Activated B cell treated with CpG ODN at 0.5 μM for 24 hours (primary cell): ENCODE measurements at regions of chr4 and their contacts with region 1.

Region 1: DNA sequence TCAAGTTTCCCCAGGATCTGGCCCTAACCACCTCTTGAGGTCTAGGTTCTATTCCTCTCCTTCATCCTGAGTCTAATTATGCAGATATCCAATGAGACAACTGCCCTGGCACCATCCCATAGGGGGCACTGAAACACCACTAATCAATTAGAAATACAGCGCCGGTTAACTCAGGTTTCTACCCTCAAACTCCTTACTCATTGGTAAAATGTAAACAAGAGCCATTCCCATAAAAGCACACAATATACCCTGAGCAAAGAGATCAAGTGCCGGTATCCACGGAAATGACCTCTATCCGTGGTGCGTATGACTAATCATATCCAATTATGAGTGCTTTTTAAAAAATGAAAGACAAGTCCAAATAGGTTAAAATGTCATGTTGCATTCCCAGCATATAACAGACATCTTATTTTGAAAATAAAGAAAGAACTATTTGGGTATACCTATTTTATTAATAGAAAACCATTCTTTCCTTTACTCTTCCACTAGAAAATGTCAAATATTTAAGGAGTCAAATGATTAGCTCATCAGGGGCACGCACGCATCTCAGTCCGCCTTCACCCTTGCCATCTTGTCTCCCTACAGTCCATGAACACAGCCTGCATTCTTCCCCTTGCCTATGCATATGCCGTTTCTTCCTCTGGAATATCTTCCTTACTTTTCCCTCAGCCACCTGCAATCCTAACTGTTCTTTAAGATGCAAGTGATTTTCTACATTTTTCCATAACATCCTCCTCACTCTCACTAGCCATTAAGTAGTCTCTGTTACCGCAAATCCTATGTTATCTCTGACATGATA is 141.1 kb downstream of the MAML3 start:
- DNase-seq: no peak
- ATAC-seq: peak; percentile 81
- H3K4me3 Mint-ChIP-seq: no peak overlapping the region
- H3K27ac Mint-ChIP-seq: no peak overlapping the region
- H3K4me1 Mint-ChIP-seq: no peaks in the 10 kb centered on the region
- H3K27me3 Mint-ChIP-seq: peaks cover 10% of the 10 kb centered on the region
- CTCF ChIP-seq: no peak

Region 2: DNA sequence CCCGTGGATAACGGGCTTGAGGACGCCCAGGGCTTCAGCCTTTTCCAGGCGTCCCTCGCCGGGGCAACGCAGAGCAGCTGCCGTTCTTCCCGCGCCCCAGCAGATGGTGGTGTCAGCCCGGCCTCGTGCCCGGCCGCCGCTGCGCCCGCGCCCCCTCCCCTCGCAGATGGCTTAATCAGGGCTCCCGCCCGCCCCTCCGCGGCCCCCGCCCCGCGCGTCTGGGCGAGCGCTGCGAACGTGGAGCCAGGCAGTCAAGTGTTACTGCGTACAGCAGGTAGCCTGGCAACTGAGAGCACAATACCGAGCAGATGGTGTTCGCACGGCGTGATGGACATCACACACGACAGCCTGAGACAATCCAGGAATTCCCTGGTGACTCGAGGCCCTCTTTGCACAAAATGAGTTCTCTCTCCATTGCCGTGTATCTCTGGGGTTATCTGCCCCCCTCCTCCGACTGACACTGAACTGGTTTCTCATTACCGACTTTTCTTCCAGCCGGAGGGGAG is 278.0 kb before region 1 on chr4:
- CTCF ChIA-PET with region 1: no interaction called
- POLR2A ChIA-PET with region 1: no interaction called
- intact Hi-C with region 1: loop called (anchors 1 kb)
- DNase-seq: peak; percentile 66
- ATAC-seq: peak; percentile 87
- H3K4me3 Mint-ChIP-seq: peak overlapping the region; percentile 76
- H3K27ac Mint-ChIP-seq: no peak overlapping the region
- H3K4me1 Mint-ChIP-seq: peaks cover 15% of the 10 kb centered on the region
- H3K27me3 Mint-ChIP-seq: peaks cover 13% of the 10 kb centered on the region
- CTCF ChIP-seq: no peak

Region 3: DNA sequence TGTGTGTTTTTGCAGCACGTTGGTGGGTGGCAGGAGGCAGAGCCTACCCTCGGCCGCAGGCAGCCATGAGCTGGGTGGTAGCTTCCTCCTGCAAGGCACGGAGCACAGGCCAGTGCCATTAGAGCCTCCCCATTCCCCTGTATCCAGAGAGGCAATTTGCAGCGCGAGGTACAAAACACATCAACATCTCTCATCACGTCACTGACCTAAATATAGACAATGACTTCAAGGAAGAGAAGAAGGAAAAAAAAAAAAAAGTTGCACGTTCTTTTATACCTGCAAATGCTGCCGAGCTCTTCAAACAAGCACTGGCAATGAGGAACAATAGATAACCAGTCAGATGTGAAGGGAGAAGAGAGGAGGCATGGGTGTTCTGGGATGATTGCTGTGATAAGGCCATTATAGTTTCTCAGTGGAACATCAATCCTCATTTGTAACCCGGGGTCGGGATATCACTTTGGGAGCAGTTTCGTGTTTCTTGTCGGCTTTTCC is 187.3 kb before region 1 on chr4:
- CTCF ChIA-PET with region 1: no interaction called
- POLR2A ChIA-PET with region 1: no interaction called
- intact Hi-C with region 1: no loop called
- DNase-seq: no peak
- ATAC-seq: no peak
- H3K4me3 Mint-ChIP-seq: no peak overlapping the region
- H3K27ac Mint-ChIP-seq: no peak overlapping the region
- H3K4me1 Mint-ChIP-seq: no peaks in the 10 kb centered on the region
- H3K27me3 Mint-ChIP-seq: no peaks in the 10 kb centered on the region
- CTCF ChIP-seq: no peak

Region 4: DNA sequence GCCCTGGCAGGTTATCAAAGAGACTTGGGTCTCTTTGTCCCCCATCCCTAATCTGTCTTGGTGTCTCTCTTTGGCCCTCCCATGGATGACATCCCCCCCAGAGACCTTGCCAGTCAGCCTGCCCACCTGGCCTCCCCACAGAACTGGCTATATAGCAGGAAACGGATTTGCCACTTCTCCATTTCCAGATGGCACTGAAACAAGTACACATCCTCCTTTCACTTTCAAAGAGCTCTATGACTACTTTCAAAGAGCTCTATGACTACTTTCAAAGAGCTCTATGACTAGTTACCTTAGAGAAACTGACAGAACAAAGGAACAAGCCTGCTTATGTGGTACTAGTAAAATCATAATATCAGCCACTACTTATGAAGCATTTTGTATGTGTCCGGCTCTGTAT is 34.2 kb before region 1 on chr4:
- CTCF ChIA-PET with region 1: no interaction called
- POLR2A ChIA-PET with region 1: no interaction called
- intact Hi-C with region 1: no loop called
- DNase-seq: peak; percentile 33
- ATAC-seq: peak; percentile 87
- H3K4me3 Mint-ChIP-seq: peak overlapping the region; percentile 65
- H3K27ac Mint-ChIP-seq: peak overlapping the region; percentile 65
- H3K4me1 Mint-ChIP-seq: peaks cover 55% of the 10 kb centered on the region
- H3K27me3 Mint-ChIP-seq: no peaks in the 10 kb centered on the region
- CTCF ChIP-seq: no peak

Region 5: DNA sequence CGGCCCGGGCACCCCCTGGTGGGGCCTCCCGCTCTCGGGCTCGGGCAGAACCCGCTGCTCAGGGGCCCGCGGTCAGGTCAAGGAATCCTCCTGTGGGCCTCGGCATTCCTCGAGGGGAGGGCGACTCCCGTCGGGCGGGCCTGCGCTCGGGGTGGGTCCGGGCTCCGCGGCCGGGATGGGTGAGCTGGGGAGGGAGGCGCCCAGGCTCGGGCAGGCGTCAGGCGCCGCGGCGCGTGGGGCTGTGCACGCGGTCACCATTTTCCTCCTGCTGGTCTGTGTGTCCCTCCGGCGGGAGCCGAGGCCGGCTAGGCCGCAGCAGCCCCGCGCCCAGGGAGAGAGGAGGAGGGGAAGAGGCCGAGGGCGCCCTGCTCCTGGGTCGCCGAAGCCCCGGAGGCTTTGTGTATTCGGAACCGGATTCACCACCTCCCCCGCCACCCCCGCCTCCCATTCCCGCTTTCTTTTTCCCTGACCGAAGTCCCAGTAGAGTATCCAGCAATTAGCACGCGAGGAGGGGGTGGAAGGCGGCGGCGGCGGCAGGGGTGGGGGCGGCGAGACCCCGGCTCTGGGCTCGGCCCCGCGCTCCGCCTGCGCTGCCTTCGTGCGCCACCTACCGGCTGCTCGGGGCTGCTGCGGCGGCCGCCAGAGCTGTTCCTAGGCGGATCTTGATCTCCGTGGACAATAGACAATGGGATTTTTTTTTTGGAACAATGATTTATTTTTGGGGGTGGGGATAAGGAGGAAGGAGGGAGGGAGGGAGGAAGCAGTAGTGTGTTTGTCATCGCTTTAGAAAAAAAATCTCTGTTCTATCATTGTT is 240.1 kb after region 1 on chr4:
- CTCF ChIA-PET with region 1: interaction called, 83 read pairs
- POLR2A ChIA-PET with region 1: interaction called, 9 read pairs
- intact Hi-C with region 1: loop called (anchors 1 kb)
- DNase-seq: peak; percentile 67
- ATAC-seq: peak; percentile 83
- H3K4me3 Mint-ChIP-seq: peak overlapping the region; percentile 72
- H3K27ac Mint-ChIP-seq: no peak overlapping the region
- H3K4me1 Mint-ChIP-seq: peaks cover 8% of the 10 kb centered on the region
- H3K27me3 Mint-ChIP-seq: peaks cover 25% of the 10 kb centered on the region
- CTCF ChIP-seq: peak; percentile 82

Region 6: DNA sequence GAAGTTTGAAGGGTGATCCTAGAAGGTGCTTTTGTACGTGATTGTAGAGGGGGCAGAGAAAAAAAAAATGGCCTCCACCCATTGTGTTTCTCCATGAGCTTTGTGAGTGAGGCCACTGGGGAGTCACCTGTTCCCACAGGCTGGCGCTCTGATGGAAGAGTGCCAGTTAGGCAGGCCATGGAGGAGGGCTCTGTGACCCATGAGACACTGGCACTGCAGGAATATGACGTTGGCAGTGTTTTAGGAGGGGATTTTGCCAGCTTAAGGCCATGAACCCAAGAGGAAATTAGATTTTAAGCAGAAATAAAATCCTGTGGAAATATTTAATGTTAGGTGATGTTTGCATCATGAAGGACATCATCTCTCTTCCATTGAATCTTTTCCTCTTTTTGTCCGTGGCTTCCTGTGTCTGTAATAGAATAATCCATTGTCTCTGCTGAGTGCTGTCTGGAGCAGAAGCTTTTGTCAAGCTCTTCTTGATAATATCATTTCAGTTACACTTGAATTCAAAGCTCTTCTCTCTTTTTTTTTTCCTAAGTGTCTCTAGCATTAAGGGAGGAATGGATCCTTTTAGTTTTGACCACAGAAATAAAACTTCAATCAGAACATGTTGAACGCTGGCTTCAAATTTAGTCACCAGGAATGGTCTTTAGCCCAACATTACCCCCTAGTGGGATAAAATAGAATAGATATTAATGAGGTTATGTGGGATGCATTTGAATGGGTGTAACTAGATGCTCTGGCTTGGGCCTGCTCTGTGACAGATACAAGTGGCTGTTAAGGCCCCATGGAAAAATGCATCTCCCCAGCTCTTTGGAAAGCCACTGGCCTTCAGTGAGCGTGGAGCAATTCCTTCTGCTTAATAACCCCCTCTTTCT is 596.9 kb after region 1 on chr4:
- CTCF ChIA-PET with region 1: no interaction called
- POLR2A ChIA-PET with region 1: no interaction called
- intact Hi-C with region 1: loop called (anchors 5 kb)
- DNase-seq: no peak
- ATAC-seq: peak; percentile 83
- H3K4me3 Mint-ChIP-seq: no peak overlapping the region
- H3K27ac Mint-ChIP-seq: no peak overlapping the region
- H3K4me1 Mint-ChIP-seq: peaks cover 12% of the 10 kb centered on the region
- H3K27me3 Mint-ChIP-seq: peaks cover 8% of the 10 kb centered on the region
- CTCF ChIP-seq: peak; percentile 49

Region 7: DNA sequence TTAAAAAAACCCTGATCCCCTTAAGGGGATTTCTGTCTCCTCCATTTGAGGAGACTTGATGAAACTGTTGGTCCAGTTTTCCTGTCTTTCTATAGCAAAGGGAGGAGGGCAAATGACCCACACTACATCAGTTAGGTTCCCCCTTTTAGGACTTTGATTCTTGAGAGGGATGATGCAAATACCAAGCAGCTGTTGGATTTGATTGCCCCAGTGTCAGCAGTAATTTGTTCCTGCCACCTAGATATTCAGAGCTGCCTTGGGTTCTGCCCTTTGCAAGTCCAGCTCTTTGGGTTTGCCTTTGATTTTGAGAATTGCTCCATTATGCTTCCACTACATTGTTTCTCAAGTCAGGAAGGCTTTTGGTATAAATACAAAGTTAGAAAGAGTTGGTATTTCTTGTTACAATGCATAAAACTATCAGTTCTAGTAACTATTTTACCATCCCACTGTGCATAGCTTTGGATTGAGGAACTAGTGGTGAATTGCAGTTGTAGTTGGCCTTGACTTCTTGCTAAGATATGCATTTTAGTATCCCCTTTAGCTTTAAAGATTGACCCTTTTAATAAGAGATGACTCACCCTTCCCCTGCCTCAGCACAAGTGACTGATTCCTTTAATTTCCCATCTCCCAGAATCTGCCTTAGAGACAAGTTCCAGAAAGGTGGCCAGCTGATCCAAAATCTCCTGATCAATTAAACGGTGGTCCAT is 1183.5 kb after region 1 on chr4:
- CTCF ChIA-PET with region 1: no interaction called
- POLR2A ChIA-PET with region 1: no interaction called
- intact Hi-C with region 1: no loop called
- DNase-seq: no peak
- ATAC-seq: no peak
- H3K4me3 Mint-ChIP-seq: no peak overlapping the region
- H3K27ac Mint-ChIP-seq: no peak overlapping the region
- H3K4me1 Mint-ChIP-seq: no peaks in the 10 kb centered on the region
- H3K27me3 Mint-ChIP-seq: peaks cover 20% of the 10 kb centered on the region
- CTCF ChIP-seq: no peak